Dendritic cell treated with granulocyte-macrophage colony-stimulating factor and Interleukin-4, amounts not matched to agents 40 ng/mL and 50 ng/mL, for 4 days (primary cell): ENCODE measurements at regions of chr11 and their contacts with region 1.

Region 1: DNA sequence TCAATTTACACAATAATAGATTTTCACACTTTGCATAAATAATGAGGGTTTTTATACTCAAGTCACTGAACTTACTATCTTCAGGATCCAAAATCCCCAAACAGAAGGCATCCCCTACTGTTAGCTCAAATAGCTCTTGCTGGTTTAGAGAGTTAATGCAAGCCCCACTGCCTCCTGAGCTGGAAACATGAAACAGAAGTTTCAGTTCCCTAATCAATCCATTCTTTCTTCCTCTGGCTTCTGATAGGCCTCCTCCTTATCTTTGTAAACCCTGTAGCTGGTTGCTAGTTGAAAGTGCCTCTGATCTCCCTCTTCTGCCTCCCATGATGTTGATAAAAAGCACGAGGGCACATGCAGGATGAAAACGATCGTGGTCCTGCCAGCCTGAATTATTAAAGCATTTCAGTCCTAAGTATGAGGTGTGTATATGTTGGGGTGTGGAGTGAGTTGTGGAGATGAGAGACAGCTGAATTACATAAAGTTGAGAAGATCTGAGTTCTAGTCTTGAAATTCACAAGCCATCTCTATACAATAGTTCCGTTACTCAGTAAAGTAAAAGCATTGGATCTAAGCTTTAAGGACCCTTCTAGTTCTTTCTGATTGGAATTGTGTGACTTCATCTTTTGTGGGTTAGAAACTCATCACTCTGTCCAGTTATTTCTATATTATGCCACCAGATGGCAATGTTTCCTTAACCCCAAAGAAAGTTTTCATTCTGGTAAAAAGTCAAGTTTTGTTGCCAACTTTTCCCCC is 35.0 kb upstream of the EHF start:
- H3K4me3 Mint-ChIP-seq: no peak overlapping the region
- H3K27ac Mint-ChIP-seq: peak overlapping the region; percentile 77
- H3K4me1 Mint-ChIP-seq: peaks cover 36% of the 10 kb centered on the region
- H3K27me3 Mint-ChIP-seq: no peaks in the 10 kb centered on the region

Region 2: DNA sequence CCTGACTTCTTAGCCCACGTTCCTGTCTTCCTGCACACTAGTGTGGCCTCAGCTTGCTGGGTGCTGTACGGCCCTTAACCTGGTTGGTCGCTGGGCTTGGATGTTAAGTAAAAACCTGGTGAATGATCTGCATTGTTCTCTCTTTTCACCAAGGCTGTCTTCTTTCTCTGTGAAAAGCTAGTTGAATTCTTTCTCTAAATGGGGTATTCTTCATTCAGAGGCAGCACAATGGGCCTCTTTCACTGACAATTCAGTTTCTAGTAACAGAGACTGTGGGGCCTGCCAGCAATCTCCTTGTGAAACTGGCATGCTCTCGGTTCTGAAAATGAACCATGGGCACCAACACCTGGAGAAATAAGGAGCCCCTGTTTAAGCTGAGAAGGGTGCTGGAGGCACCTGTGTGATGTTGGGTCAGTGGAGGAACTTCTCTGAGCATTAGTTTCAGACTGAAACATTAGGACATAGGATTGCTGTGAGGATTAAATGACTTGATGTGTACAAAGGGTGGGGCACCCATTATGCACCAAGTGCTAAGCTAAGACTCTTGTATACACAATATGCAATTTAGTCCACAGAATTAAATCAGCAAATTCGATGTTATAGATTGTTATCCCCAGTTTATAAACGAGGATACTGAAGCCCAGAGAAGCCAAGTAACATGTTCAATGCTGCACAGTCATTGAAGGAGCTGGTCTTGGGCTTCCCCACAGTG is 39.2 kb before region 1 on chr11:
- intact Hi-C with region 1: no loop called
- H3K4me3 Mint-ChIP-seq: no peak overlapping the region
- H3K27ac Mint-ChIP-seq: no peak overlapping the region
- H3K4me1 Mint-ChIP-seq: peaks cover 3% of the 10 kb centered on the region
- H3K27me3 Mint-ChIP-seq: peaks cover 17% of the 10 kb centered on the region

Region 3: GRCh38 chr11:34633990-34634693 is 48.2 kb after region 1 on chr11:
- intact Hi-C with region 1: loop called (anchors 5 kb)
- H3K4me3 Mint-ChIP-seq: peak overlapping the region; percentile 34
- H3K27ac Mint-ChIP-seq: peak overlapping the region; percentile 73
- H3K4me1 Mint-ChIP-seq: peaks cover 74% of the 10 kb centered on the region
- H3K27me3 Mint-ChIP-seq: no peaks in the 10 kb centered on the region

Region 4: DNA sequence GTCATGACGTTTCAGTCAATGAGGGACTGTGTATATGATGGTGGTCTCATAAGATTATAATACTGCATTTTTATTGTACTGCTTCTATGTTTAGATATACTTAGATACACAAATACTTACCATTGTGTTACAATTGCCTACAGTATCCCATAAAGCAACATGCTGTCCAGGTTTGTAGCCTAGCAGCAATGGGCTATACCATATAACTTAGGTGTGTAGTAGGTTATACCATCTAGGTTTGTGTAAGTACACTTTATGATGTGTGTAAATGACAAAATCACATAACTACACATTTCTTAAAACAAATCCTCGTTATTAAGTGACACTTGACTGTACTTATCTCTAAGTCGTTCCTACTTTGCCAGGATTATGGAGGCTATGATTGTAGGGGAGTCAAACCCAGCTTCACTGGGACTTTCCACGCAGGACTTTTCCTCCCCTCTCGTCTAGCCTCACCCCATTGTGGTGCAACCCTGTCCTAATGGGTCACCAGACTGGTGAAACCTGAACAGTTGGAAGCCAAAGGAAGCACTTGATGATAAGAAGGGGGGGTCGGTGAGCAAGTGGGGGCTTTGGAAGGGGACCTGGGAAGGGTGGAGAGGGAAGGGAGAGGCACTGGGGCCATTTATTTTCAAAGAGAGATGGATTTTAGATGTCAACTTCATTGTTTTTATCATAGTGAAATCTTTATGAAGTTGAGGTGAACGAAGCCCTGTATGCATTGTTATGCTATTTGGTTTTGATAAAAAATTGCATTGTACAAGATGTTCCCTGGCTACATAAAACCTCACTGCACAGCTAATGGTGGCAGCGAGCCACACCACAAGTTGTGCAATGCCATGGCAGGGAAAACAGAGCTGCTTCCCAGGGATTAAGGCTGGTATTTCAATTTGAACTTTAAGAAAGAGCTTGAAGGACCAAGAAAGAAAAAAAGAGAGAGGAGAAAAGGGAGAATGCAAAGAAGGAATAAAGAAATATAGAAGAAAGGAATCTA is 164.1 kb after region 1 on chr11:
- intact Hi-C with region 1: no loop called
- H3K4me3 Mint-ChIP-seq: no peak overlapping the region
- H3K27ac Mint-ChIP-seq: no peak overlapping the region
- H3K4me1 Mint-ChIP-seq: peaks cover 8% of the 10 kb centered on the region
- H3K27me3 Mint-ChIP-seq: peaks cover 11% of the 10 kb centered on the region

Region 5: DNA sequence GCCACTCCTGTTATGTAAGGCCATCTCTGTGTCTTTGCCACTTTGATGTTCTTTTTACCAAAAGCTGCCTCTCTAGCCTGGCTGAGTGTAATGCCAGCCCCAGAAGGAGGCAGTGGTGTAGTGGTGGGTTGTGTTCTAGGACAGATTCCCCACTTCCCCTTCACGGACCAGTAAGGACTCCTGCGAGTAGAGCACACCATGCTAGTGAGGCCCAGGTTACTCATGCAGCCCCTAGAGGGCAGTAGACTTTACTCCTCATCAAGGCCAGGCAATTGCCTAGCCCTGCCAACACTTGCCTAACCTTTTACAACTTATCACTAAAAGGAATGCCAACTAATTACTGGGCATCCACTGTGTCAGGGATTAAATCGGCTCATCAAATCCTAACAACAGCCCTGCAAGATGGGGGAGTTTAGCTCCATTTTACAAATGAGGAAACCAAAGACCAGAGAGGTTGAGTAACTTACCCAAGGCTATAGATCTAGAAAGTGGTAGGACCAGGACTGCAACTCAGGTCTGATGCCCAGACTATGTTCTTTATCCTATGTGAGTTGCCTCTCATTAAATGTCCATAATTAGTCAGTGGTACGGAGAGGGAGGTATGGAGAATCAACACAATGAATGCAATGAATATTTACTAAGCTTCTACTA is 254.9 kb after region 1 on chr11:
- intact Hi-C with region 1: loop called (anchors 5 kb)
- H3K4me3 Mint-ChIP-seq: no peak overlapping the region
- H3K27ac Mint-ChIP-seq: no peak overlapping the region
- H3K4me1 Mint-ChIP-seq: peaks cover 11% of the 10 kb centered on the region
- H3K27me3 Mint-ChIP-seq: no peaks in the 10 kb centered on the region

Region 6: DNA sequence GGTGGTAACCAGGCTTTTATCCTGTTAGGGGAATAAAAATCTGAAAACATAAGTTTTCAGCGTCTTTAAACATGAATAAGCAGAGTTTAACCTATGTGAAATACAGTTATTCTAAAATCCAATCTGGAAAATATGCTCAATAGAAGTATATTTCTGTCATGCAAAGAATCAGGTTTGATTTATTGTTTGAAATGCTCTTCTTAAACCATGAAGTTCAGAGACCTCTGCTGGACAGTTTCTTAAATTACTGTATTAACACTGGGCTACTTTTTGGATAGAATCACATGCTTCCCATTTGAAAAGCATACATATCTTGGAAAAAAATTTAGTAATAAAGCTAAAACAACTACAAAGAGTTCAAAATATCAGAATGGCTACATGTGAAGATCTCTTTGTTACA is 304.9 kb after region 1 on chr11:
- intact Hi-C with region 1: loop called (anchors 1 kb)
- H3K4me3 Mint-ChIP-seq: no peak overlapping the region
- H3K27ac Mint-ChIP-seq: no peak overlapping the region
- H3K4me1 Mint-ChIP-seq: no peaks in the 10 kb centered on the region
- H3K27me3 Mint-ChIP-seq: no peaks in the 10 kb centered on the region